Upper lobe of right lung (tissue), 1 donor: ENCODE measurements at regions of chr11 and their contacts with region 1.

Region 1: GRCh38 chr11:129323896-129324512 is 51.6 kb upstream of the BARX2 start:
- DNase-seq: no peak
- ATAC-seq: peak; percentile 92
- H3K4me3 ChIP-seq: peak overlapping the region; percentile 23
- H3K27ac ChIP-seq: peak overlapping the region; percentile 64
- H3K4me1 ChIP-seq: peaks cover 29% of the 10 kb centered on the region
- H3K27me3 ChIP-seq: no peaks in the 10 kb centered on the region
- CTCF ChIP-seq: no peak

Region 2: DNA sequence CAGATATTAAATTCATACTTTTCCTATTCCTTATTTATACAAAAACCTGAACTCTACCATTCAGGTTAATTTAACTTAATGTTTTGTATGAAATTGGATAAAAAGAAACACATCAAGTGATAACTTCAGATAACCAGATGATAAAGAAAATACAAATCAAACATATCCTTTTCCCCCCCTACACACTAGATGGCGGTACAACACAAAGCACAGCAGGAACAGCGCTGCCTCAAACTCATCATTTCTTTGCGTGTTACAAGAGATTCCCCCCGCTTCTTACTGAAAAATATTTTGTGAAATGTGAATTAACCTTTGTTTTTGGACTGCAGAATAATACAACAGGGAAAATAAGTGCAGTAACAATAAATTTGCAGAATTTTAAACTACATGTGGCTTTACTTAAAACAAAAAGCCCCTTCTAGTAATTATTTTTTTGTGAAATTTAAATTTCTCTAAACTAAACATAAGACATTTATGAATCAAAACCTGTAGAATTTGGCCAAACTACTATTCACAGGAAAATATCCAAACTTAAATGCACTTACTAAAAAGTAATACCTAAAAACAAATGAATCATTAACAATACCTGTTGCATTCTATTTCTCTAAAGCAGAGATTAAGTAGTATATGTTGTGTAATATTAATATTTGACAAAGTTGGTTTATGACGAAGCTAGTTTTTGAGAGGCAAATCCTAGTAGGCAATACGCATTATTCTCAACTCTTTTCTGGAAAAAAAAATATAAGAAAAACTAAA is 206.2 kb before region 1 on chr11:
- intact Hi-C with region 1: loop called (anchors 10 kb)
- DNase-seq: no peak
- ATAC-seq: peak; percentile 85
- H3K4me3 ChIP-seq: no peak overlapping the region
- H3K27ac ChIP-seq: no peak overlapping the region
- H3K4me1 ChIP-seq: no peaks in the 10 kb centered on the region
- H3K27me3 ChIP-seq: no peaks in the 10 kb centered on the region
- CTCF ChIP-seq: peak; percentile 85

Region 3: DNA sequence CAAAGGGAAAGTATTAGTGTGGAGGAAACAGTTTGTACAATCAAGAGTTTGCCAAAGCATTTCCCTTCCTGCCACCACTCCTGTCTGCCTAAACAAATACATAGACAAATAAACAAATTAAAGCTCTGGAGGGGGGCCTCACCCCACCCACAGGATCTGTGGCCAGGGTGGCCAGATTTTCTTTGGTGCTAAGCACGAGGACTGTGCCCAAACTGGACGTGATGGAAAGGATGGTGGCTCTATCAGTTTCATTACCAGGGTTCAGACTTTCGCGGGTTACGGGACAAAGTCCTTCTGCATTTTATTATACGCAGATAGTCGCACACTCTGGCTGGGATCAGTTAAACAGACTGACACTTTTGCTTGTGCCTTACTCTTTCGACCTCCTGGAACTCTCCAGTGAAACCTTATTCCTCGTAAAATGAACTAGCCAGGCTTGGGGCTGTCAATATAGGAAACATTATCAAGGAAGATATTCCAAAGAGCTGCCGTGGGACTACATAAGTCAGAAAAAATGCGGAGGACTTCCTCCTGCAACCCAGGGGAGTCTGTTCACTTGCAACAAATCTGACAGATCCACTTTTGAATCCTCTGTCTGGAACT is 62.9 kb after region 1 on chr11:
- intact Hi-C with region 1: no loop called
- DNase-seq: no peak
- ATAC-seq: no peak
- H3K4me3 ChIP-seq: no peak overlapping the region
- H3K27ac ChIP-seq: no peak overlapping the region
- H3K4me1 ChIP-seq: no peaks in the 10 kb centered on the region
- H3K27me3 ChIP-seq: peaks cover 18% of the 10 kb centered on the region
- CTCF ChIP-seq: no peak